ENCODE measurements at regions of chr2 and their contacts with region 1.

Region 1: DNA sequence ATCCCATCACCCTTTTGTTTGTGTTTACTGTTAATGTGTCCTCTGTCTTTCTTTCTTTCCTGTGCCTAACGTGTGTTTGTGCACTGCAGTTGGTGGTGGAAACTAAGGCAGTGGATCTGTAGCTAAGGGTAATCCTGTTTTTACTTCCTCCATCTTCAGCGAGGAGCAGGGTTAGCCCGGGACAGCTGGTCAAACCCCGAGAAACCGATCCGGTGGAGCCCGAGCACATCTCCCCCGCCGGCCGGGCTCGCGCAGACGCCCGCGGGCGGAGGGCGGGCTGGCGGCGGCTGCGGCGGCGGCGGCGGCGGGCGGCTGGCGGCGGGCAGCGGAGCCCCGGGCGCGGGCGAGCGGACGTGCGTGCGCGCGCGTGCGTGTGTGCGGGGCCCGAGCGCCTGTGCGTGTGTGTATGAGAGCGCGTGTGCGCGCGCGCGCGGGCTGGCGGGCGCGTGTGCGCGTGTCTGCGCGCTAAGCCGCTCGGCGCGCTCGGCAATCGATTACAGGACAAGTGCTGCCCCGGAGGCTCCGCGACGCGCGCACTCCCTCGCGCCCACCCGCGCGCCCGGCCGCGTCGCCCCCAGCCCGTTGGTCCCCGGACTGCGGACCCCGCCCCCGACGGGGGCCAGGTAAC is at the start of gene IKZF2:
- DNase-seq: peak; percentile 84 to 95 (median 92)
- H3K4me3 ChIP-seq: peak within 1 kb of the TSS; percentile 96 to 99 (median 97)
- H3K27ac ChIP-seq: peak within 1 kb of the TSS; percentile 82 to 94
- H3K4me1 ChIP-seq: peaks cover 0 to 2% (median 0%) of the 10 kb centered on the region in 3 donors
- H3K27me3 ChIP-seq: no peaks in the 10 kb centered on the region
- CTCF ChIP-seq: no peak
- total RNA-seq, gene IKZF2: 12.4 TPM

Region 2: GRCh38 chr2:212686285-212686895 is 465.2 kb before region 1 on chr2:
- intact Hi-C with region 1: loop called (anchors 10 kb)
- DNase-seq: peak in 4 of 5 donors; percentile 49 to 81 (median 64)
- H3K4me3 ChIP-seq: no peak overlapping the region
- H3K27ac ChIP-seq: no peak overlapping the region
- H3K4me1 ChIP-seq: no peaks in the 10 kb centered on the region
- H3K27me3 ChIP-seq: no peaks in the 10 kb centered on the region
- CTCF ChIP-seq: peak; percentile 68

Region 3: GRCh38 chr2:212777020-212777491 is 374.5 kb before region 1 on chr2:
- intact Hi-C with region 1: loop called (anchors 10 kb)
- DNase-seq: peak in 2 of 5 donors; percentile 45 to 47
- H3K4me3 ChIP-seq: no peak overlapping the region
- H3K27ac ChIP-seq: no peak overlapping the region
- H3K4me1 ChIP-seq: peaks cover 0 to 4% (median 0%) of the 10 kb centered on the region in 3 donors
- H3K27me3 ChIP-seq: no peaks in the 10 kb centered on the region
- CTCF ChIP-seq: peak; percentile 38